HepG2 (cell line): ENCODE measurements at regions of chr14 and their contacts with region 1.

Region 1: GRCh38 chr14:77139540-77140358 is 1.8 kb downstream of the ZDHHC22 start:
- DNase-seq: peak; percentile 29
- ATAC-seq: peak; percentile 79
- H3K4me3 ChIP-seq: peak overlapping the region; percentile 30 to 58 (median 46); a peak in 3 of 6 replicates
- H3K27ac ChIP-seq: no peak overlapping the region
- H3K4me1 ChIP-seq: peaks cover 19% of the 10 kb centered on the region
- H3K27me3 ChIP-seq: peaks cover 5 to 42% of the 10 kb centered on the region in 2 experiments; a peak in 4 of 5 replicates
- CTCF ChIP-seq: peak; percentile 76
- EP300 ChIP-seq: no peak
- POLR2A ChIP-seq: no peak
- RAD21 ChIP-seq: peak; percentile 60; the same call in 1 of the 2 replicates

Region 2: GRCh38 chr14:77212943-77213678 is 73.4 kb after region 1 on chr14:
- CTCF ChIA-PET with region 1: interaction called, 7 read pairs
- POLR2A ChIA-PET with region 1: no interaction called
- in situ Hi-C with region 1: loop called (anchors 5 kb)
- intact Hi-C with region 1: loop called (anchors 5 kb)
- DNase-seq: peak; percentile 13
- ATAC-seq: peak; percentile 93
- H3K4me3 ChIP-seq: no peak overlapping the region
- H3K27ac ChIP-seq: no peak overlapping the region
- H3K4me1 ChIP-seq: no peaks in the 10 kb centered on the region
- H3K27me3 ChIP-seq: peaks cover 0 to 1% of the 10 kb centered on the region in 2 experiments; a peak in 1 of 5 replicates
- CTCF ChIP-seq: peak; percentile 88
- EP300 ChIP-seq: no peak
- POLR2A ChIP-seq: no peak
- RAD21 ChIP-seq: peak; percentile 76

Region 3: DNA sequence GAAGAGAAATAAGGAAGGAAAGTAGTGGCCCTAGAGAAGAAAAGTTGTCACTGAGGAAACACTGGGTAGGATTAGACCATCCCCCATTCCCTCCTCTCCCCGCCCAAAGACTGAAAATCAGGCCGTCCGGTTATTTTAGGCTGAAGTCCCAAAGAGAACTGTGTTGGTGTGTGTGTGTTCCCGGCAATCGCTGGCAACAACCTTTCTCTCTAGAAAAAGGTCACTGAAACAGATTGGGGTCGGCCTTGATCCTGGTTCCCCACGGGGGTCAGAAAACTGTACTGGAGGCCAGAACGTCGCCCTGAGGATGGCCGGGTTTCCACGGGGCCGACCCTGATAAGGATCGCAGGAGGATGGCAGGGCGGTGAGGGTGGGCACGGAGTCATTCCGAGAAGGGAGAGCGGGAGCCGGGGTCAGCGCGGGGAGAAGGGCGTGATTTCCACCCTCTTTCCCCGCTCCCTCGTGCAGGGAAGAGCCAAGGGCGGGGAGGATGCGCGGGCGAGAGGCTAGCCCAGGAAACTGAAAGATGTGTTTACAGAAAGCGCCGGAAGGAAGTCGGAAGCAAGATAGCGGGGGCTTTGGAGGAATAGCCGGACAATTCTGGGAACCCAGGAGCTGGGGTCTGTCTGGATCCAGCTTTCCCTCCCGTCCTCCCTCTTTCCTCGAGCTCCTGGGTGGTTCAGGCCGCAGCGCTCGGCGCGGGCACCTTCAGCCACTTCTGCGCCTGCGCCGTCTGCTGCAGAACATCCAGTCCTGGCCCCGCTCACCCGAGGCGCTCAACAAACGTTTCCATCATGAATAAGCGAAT is 502.0 kb after region 1 on chr14:
- CTCF ChIA-PET with region 1: no interaction called
- POLR2A ChIA-PET with region 1: no interaction called
- in situ Hi-C with region 1: no loop called
- intact Hi-C with region 1: no loop called
- DNase-seq: no peak
- ATAC-seq: no peak; the same call in 1 of the 3 replicates
- H3K4me3 ChIP-seq: no peak overlapping the region
- H3K27ac ChIP-seq: no peak overlapping the region
- H3K4me1 ChIP-seq: peaks cover 21% of the 10 kb centered on the region
- H3K27me3 ChIP-seq: peaks cover 0 to 1% of the 10 kb centered on the region in 2 experiments; a peak in 1 of 5 replicates
- CTCF ChIP-seq: no peak
- EP300 ChIP-seq: no peak
- POLR2A ChIP-seq: no peak
- RAD21 ChIP-seq: no peak